CD4-positive, alpha-beta memory T cell (primary cell): ENCODE measurements at regions of chr20 and their contacts with region 1.

Region 1: DNA sequence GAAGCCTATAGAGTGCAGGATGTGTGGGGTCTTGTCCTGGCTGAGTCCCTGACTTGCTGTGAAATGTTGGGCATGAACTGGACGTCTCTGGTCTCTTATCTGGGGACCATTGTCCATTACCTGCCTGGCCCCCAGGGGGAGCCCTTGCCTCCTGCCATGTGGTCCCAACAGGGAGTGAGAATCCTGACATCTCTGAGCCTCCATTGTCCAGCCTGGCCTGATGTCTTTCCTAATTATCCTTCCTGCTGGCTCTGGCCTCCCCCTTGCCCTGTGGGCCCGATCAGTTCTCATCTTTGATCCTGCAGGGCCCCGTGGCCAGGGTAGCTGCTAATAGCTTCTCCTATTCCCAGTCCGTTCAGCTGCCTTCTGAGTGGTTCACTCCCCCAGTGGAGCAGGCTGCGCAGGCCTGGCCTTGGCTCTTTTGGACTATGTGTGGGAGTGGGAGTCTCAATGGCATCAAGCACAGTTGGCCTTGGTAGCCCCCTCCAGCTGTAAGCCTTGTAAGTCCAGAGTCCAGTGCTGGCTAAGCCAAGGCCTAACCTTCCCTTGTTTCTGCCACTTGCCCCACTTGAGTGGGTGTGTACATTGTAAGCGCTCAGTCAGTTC is 77.9 kb upstream of the RALY start:
- DNase-seq: peak in 4 of 5 donors; percentile 37 to 46 (median 42)
- H3K4me3 ChIP-seq: no peak overlapping the region
- H3K4me3 Mint-ChIP-seq: no peak overlapping the region
- H3K27ac ChIP-seq: no peak overlapping the region
- H3K27ac Mint-ChIP-seq: peak overlapping the region in 1 of 7 donors; percentile 48
- H3K4me1 ChIP-seq: peaks cover 12% of the 10 kb centered on the region
- H3K4me1 Mint-ChIP-seq: peaks cover 6 to 11% (median 8%) of the 10 kb centered on the region in 4 donors
- H3K27me3 ChIP-seq: no peaks in the 10 kb centered on the region
- H3K27me3 Mint-ChIP-seq: peaks cover 0 to 6% of the 10 kb centered on the region in 2 donors

Region 2: GRCh38 chr20:33862709-33863403 is 53.0 kb before region 1 on chr20:
- CTCF ChIA-PET with region 1: interaction called, 19 read pairs
- POLR2A ChIA-PET with region 1: interaction called, 4 read pairs
- intact Hi-C with region 1: no loop called
- DNase-seq: peak in 3 of 5 donors; percentile 24 to 39 (median 28)
- H3K4me3 ChIP-seq: no peak overlapping the region
- H3K4me3 Mint-ChIP-seq: peak overlapping the region in 1 of 8 donors; percentile 27
- H3K27ac ChIP-seq: no peak overlapping the region
- H3K27ac Mint-ChIP-seq: no peak overlapping the region
- H3K4me1 ChIP-seq: peaks cover 30% of the 10 kb centered on the region
- H3K4me1 Mint-ChIP-seq: peaks cover 15 to 26% (median 21%) of the 10 kb centered on the region in 4 donors
- H3K27me3 ChIP-seq: no peaks in the 10 kb centered on the region
- H3K27me3 Mint-ChIP-seq: no peaks in the 10 kb centered on the region

Region 3: GRCh38 chr20:33933469-33933909 is 17.7 kb after region 1 on chr20:
- CTCF ChIA-PET with region 1: interaction called, 14 read pairs
- POLR2A ChIA-PET with region 1: no interaction called
- intact Hi-C with region 1: no loop called
- DNase-seq: peak; percentile 50 to 63 (median 58)
- H3K4me3 ChIP-seq: no peak overlapping the region
- H3K4me3 Mint-ChIP-seq: no peak overlapping the region
- H3K27ac ChIP-seq: no peak overlapping the region
- H3K27ac Mint-ChIP-seq: peak overlapping the region in 2 of 7 donors; percentile 47 to 48
- H3K4me1 ChIP-seq: no peaks in the 10 kb centered on the region
- H3K4me1 Mint-ChIP-seq: peaks cover 0 to 2% (median 0%) of the 10 kb centered on the region in 4 donors
- H3K27me3 ChIP-seq: no peaks in the 10 kb centered on the region
- H3K27me3 Mint-ChIP-seq: no peaks in the 10 kb centered on the region

Region 4: GRCh38 chr20:33999025-33999649 is 83.3 kb after region 1 on chr20:
- CTCF ChIA-PET with region 1: no interaction called
- POLR2A ChIA-PET with region 1: no interaction called
- intact Hi-C with region 1: no loop called
- DNase-seq: no peak
- H3K4me3 ChIP-seq: no peak overlapping the region
- H3K4me3 Mint-ChIP-seq: peak overlapping the region; percentile 1 to 67 (median 54)
- H3K27ac ChIP-seq: no peak overlapping the region
- H3K27ac Mint-ChIP-seq: peak overlapping the region in 4 of 7 donors; percentile 13 to 93 (median 49)
- H3K4me1 ChIP-seq: peaks cover 85% of the 10 kb centered on the region
- H3K4me1 Mint-ChIP-seq: peaks cover 72 to 95% (median 84%) of the 10 kb centered on the region in 4 donors
- H3K27me3 ChIP-seq: no peaks in the 10 kb centered on the region
- H3K27me3 Mint-ChIP-seq: no peaks in the 10 kb centered on the region

Region 5: DNA sequence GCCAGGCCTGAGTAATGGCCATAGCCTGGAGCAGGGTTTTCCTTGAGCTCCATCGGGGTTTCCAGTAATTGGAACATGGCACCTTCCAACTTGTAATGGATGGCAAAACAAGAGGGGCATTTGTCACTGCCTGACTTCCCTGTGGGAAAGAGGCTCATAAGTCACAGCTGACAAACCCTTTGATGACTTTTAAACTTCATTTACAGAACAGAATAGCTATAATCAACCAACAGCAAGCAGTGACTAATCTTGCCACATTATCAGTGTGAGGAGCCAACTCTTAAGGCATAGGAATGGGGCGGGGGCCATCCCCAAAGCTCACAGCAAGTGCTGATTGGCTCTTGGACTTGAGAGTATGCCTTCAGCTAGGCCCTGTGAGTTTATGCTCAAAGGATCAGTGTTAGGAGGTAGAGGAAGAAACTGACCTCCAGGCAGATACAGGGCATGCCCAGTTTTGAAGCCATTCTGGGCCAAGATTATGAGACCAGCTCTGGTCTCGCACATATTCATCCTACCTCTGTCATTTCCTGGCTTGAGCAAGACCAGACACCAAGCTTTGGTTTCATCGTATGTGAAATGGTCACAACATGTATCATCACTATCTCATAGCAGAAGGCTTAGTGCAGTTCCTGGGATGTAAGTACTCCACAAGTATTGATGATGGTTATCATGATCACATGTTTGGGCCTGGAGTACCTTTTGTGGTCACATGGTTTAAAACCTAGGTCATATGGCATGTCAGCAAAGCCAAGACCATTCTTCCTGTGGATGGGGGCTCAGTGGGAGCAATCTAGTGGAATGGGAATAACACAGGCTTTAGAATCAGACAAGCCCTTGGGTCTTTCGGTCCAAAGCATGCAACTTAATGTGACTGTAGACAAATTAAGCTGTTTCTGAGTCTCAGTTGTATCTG is 147.0 kb after region 1 on chr20:
- CTCF ChIA-PET with region 1: interaction called, 84 read pairs
- POLR2A ChIA-PET with region 1: interaction called, 3 read pairs
- intact Hi-C with region 1: no loop called
- DNase-seq: no peak
- H3K4me3 ChIP-seq: no peak overlapping the region
- H3K4me3 Mint-ChIP-seq: no peak overlapping the region
- H3K27ac ChIP-seq: no peak overlapping the region
- H3K27ac Mint-ChIP-seq: peak overlapping the region; percentile 63 to 87 (median 72)
- H3K4me1 ChIP-seq: peaks cover 32% of the 10 kb centered on the region
- H3K4me1 Mint-ChIP-seq: peaks cover 41 to 79% (median 63%) of the 10 kb centered on the region in 4 donors
- H3K27me3 ChIP-seq: no peaks in the 10 kb centered on the region
- H3K27me3 Mint-ChIP-seq: no peaks in the 10 kb centered on the region

Region 6: GRCh38 chr20:34129518-34130162 is 213.8 kb after region 1 on chr20:
- CTCF ChIA-PET with region 1: interaction called, 50 read pairs
- POLR2A ChIA-PET with region 1: no interaction called
- intact Hi-C with region 1: loop called (anchors 1 kb)
- DNase-seq: peak; percentile 65 to 74 (median 71)
- H3K4me3 ChIP-seq: no peak overlapping the region
- H3K4me3 Mint-ChIP-seq: peak overlapping the region in 6 of 8 donors; percentile 3 to 77 (median 36)
- H3K27ac ChIP-seq: no peak overlapping the region
- H3K27ac Mint-ChIP-seq: no peak overlapping the region
- H3K4me1 ChIP-seq: peaks cover 4% of the 10 kb centered on the region
- H3K4me1 Mint-ChIP-seq: peaks cover 4 to 6% (median 4%) of the 10 kb centered on the region in 4 donors
- H3K27me3 ChIP-seq: no peaks in the 10 kb centered on the region
- H3K27me3 Mint-ChIP-seq: peaks cover 4 to 6% of the 10 kb centered on the region in 2 donors